GM10248 (cell line): ENCODE measurements at regions of chr12 and their contacts with region 1.

Region 1: GRCh38 chr12:108950991-108951739 is 69.7 kb downstream of the SVOP start:
- DNase-seq: peak; percentile 62
- CTCF ChIP-seq: peak; percentile 81

Region 2: DNA sequence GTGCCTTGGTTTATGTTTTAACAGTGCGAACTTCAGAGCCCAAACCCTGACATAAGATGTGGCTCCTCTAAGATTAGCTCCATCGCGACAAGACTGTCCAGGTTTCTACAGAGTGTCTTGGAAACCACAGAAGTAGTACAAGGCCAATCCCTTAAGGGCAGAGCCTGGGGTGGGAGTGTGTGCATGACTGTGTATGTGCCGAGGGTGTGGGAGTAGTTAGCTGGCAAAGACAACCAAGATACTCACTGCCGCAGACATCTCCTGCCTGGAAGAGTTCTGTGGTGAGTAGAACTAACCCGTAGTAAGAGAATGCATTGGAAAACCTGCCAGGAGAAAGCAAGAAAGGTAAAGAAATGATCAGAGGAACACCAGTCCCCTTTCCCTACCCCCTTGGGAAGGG is 17.2 kb before region 1 on chr12:
- CTCF ChIA-PET with region 1: interaction called, 12 read pairs
- POLR2A ChIA-PET with region 1: interaction called, 4 read pairs
- DNase-seq: no peak
- CTCF ChIP-seq: no peak

Region 3: GRCh38 chr12:108939594-108939993 is 11.6 kb before region 1 on chr12:
- CTCF ChIA-PET with region 1: interaction called, 11 read pairs
- POLR2A ChIA-PET with region 1: no interaction called
- DNase-seq: no peak
- CTCF ChIP-seq: no peak